CD4-positive, alpha-beta memory T cell (primary cell): ENCODE measurements at regions of chr10 and their contacts with region 1.

Region 1: GRCh38 chr10:32055813-32056600 is at the start of gene KIF5B:
- DNase-seq: peak; percentile 81 to 92 (median 88)
- H3K4me3 ChIP-seq: peak within 1 kb of the TSS; percentile 88 to 93
- H3K4me3 Mint-ChIP-seq: peak within 1 kb of the TSS; percentile 95 to 99 (median 98)
- H3K27ac ChIP-seq: peak within 1 kb of the TSS; percentile 81
- H3K27ac Mint-ChIP-seq: peak within 1 kb of the TSS; percentile 94 to 97 (median 95)
- H3K4me1 ChIP-seq: peaks cover 49% of the 10 kb centered on the region
- H3K4me1 Mint-ChIP-seq: peaks cover 30 to 54% (median 44%) of the 10 kb centered on the region in 4 donors
- H3K27me3 ChIP-seq: no peaks in the 10 kb centered on the region
- H3K27me3 Mint-ChIP-seq: no peaks in the 10 kb centered on the region
- total RNA-seq, gene KIF5B: 54.8 to 55.6 TPM

Region 2: GRCh38 chr10:30701451-30702173 is 1354.4 kb before region 1 on chr10:
- CTCF ChIA-PET with region 1: no interaction called
- POLR2A ChIA-PET with region 1: no interaction called
- intact Hi-C with region 1: loop called (anchors 5 kb)
- DNase-seq: peak; percentile 75 to 88 (median 78)
- H3K4me3 ChIP-seq: peak overlapping the region in 1 of 2 donors; percentile 28
- H3K4me3 Mint-ChIP-seq: peak overlapping the region; percentile 78 to 88 (median 84)
- H3K27ac ChIP-seq: peak overlapping the region; percentile 59
- H3K27ac Mint-ChIP-seq: peak overlapping the region; percentile 90 to 98 (median 95)
- H3K4me1 ChIP-seq: peaks cover 89% of the 10 kb centered on the region
- H3K4me1 Mint-ChIP-seq: peaks cover 53 to 90% (median 77%) of the 10 kb centered on the region in 4 donors
- H3K27me3 ChIP-seq: no peaks in the 10 kb centered on the region
- H3K27me3 Mint-ChIP-seq: no peaks in the 10 kb centered on the region

Region 3: GRCh38 chr10:32190890-32191491 is 135.0 kb after region 1 on chr10:
- CTCF ChIA-PET with region 1: no interaction called
- POLR2A ChIA-PET with region 1: no interaction called
- intact Hi-C with region 1: loop called (anchors 10 kb)
- DNase-seq: peak in 4 of 5 donors; percentile 31 to 44 (median 40)
- H3K4me3 ChIP-seq: no peak overlapping the region
- H3K4me3 Mint-ChIP-seq: no peak overlapping the region
- H3K27ac ChIP-seq: no peak overlapping the region
- H3K27ac Mint-ChIP-seq: peak overlapping the region in 4 of 7 donors; percentile 5 to 59 (median 50)
- H3K4me1 ChIP-seq: no peaks in the 10 kb centered on the region
- H3K4me1 Mint-ChIP-seq: peaks cover 0 to 6% (median 3%) of the 10 kb centered on the region in 4 donors
- H3K27me3 ChIP-seq: no peaks in the 10 kb centered on the region
- H3K27me3 Mint-ChIP-seq: no peaks in the 10 kb centered on the region